Mucosa of descending colon (tissue), 3 donors: ENCODE measurements at regions of chr12 and their contacts with region 1.

Region 1: GRCh38 chr12:103877934-103878510 is 37.0 kb upstream of the NT5DC3 start:
- DNase-seq: peak in 1 of 3 donors; percentile 75
- ATAC-seq: peak; percentile 88
- H3K4me3 ChIP-seq: no peak overlapping the region
- H3K4me1 ChIP-seq: no peaks in the 10 kb centered on the region
- CTCF ChIP-seq: peak; percentile 59

Region 2: GRCh38 chr12:103626498-103626897 is 251.5 kb before region 1 on chr12:
- intact Hi-C with region 1: loop called in 1 of 2 experiments (anchors 10 kb)
- DNase-seq: peak in 2 of 3 donors; percentile 63 to 72
- ATAC-seq: peak; percentile 95
- H3K4me3 ChIP-seq: no peak overlapping the region
- H3K4me1 ChIP-seq: no peaks in the 10 kb centered on the region
- CTCF ChIP-seq: peak; percentile 30

Region 3: GRCh38 chr12:103647267-103647666 is 230.8 kb before region 1 on chr12:
- intact Hi-C with region 1: no loop called
- DNase-seq: no peak
- ATAC-seq: peak; percentile 67
- H3K4me3 ChIP-seq: no peak overlapping the region
- H3K4me1 ChIP-seq: no peaks in the 10 kb centered on the region
- CTCF ChIP-seq: no peak

Region 4: DNA sequence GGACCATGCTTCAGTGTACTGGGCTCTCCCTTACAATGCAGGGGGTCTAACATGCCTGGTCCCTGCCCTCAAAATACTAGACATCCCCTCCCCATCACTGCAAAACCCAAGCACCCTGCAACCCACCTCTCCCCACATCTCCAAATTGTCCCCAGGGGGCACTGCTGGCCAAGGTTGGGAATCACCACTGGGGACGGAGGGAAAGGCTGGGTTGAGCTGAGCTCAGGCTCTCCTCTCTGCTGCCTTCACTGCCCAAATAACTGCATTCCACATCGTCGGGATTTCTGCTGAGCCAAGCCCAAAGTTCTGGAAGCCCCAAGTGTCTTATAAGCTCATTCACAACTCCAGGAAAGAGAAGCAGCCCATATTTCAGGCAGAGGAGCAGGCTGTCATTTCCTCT is 106.6 kb before region 1 on chr12:
- intact Hi-C with region 1: loop called in 1 of 2 experiments (anchors 10 kb)
- DNase-seq: peak in 1 of 3 donors; percentile 15
- ATAC-seq: peak; percentile 58
- H3K4me3 ChIP-seq: no peak overlapping the region
- H3K4me1 ChIP-seq: no peaks in the 10 kb centered on the region
- CTCF ChIP-seq: no peak